Activated CD4-positive, alpha-beta memory T cell treated with anti-CD3 and anti-CD28 coated beads for 36 hours (primary cell): ENCODE measurements at regions of chr16 and their contacts with region 1.

Region 1: DNA sequence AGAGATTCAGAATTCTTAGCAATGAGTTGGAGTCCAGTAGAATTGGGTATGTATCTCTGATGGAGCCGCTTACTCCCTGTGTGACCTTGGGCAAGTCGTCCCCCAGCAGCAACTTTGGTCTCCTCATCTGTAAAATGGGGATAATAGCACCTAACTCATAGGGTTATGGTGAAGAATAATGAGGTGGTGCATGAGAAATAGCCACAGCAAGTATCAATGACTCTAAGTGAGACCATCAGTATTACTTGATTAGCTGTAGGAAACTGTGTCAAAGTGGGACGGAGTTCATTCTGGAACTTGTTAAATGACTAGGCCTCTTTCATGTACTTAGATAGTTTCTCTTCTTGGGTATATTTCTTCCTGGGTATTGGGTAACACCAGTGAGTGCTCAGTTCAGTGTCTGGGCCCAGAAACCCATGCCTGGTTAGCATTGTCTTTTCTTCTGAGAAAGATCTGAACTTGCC is 6.4 kb downstream of the PRKCB start:
- DNase-seq: peak; percentile 71
- H3K4me3 Mint-ChIP-seq: peak overlapping the region; percentile 14
- H3K27ac Mint-ChIP-seq: peak overlapping the region; percentile 68
- H3K4me1 Mint-ChIP-seq: peaks cover 87% of the 10 kb centered on the region
- H3K27me3 Mint-ChIP-seq: no peaks in the 10 kb centered on the region

Region 2: GRCh38 chr16:23826528-23827045 is 15.6 kb before region 1 on chr16:
- CTCF ChIA-PET with region 1: interaction called, 5 read pairs
- POLR2A ChIA-PET with region 1: interaction called, 14 read pairs
- intact Hi-C with region 1: loop called (anchors 1 kb)
- DNase-seq: no peak
- H3K4me3 Mint-ChIP-seq: peak overlapping the region; percentile 43
- H3K27ac Mint-ChIP-seq: peak overlapping the region; percentile 62
- H3K4me1 Mint-ChIP-seq: peaks cover 20% of the 10 kb centered on the region
- H3K27me3 Mint-ChIP-seq: no peaks in the 10 kb centered on the region

Region 3: DNA sequence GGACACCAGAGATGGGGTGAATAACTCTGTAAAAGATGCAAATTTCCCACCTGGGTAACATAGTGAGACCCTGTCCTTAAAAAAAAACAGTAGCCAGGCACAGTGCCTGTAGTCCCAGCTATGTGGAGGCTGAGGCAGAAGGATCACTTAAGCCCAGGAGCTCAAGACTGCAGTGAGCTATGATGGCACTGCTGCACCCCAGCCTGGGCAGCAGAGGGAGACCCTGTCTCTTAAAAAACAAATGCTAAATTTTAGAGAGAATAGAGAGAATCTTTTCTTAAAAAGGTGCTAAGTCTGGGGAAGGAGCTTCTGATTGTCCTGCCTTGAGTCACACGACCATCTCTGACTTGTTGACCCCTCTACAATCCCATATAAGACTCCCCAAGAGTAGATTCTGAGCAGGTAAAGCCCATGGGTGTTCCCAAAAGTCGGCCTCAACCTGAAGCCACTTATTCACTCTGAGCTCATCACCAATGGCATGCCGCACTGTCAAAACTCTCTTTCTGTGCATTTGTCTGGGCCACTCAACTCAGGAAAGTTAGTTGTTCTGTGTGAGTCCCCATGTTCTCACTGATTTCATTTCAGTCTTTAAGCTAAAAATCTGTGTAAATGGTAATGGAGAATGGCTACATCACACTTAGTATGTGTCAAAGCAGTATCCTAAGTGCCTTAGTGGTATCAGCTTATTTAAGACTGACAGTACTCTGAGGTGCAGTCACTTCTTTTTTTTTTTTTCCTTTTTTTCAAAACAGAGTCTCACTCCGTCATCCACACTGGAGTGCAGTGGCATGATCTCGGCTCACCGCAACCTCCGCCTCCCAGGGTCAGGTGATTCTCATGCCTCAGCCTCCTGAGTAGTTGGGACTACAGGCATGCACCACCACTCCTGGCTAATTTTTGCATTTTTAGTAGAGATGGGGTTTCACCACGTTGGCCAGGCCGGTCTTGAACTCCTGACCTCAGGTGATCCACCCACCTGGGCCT is 35.2 kb after region 1 on chr16:
- CTCF ChIA-PET with region 1: interaction called, 4 read pairs
- POLR2A ChIA-PET with region 1: interaction called, 7 read pairs
- intact Hi-C with region 1: loop called (anchors 1 kb)
- DNase-seq: peak; percentile 65
- H3K4me3 Mint-ChIP-seq: no peak overlapping the region
- H3K27ac Mint-ChIP-seq: peak overlapping the region; percentile 49
- H3K4me1 Mint-ChIP-seq: peaks cover 73% of the 10 kb centered on the region
- H3K27me3 Mint-ChIP-seq: no peaks in the 10 kb centered on the region

Region 4: GRCh38 chr16:24010440-24011089 is 168.4 kb after region 1 on chr16:
- CTCF ChIA-PET with region 1: interaction called, 13 read pairs
- POLR2A ChIA-PET with region 1: interaction called, 3 read pairs
- intact Hi-C with region 1: loop called (anchors 2 kb)
- DNase-seq: peak; percentile 86
- H3K4me3 Mint-ChIP-seq: no peak overlapping the region
- H3K27ac Mint-ChIP-seq: no peak overlapping the region
- H3K4me1 Mint-ChIP-seq: peaks cover 49% of the 10 kb centered on the region
- H3K27me3 Mint-ChIP-seq: no peaks in the 10 kb centered on the region

Region 5: DNA sequence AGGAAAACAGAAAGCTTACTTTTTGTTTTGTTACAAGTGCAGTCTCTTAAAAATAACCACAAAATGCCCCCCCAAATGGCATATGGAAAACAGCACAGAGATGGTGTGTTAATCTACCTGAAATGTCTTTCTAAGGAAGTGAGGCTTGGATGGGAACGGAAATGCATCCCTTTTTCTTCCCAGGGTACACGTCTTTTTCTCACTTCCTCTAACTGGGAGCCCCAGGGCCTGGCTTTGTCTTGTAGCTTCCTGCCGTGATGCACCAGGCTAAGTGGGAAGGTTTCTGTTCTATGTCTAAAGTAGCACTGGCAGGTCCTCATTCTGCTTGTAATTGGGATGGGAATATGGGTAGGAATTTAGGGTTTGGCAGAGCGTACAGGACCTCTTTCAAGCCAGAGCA is 361.5 kb after region 1 on chr16:
- CTCF ChIA-PET with region 1: no interaction called
- POLR2A ChIA-PET with region 1: no interaction called
- intact Hi-C with region 1: no loop called
- DNase-seq: no peak
- H3K4me3 Mint-ChIP-seq: no peak overlapping the region
- H3K27ac Mint-ChIP-seq: no peak overlapping the region
- H3K4me1 Mint-ChIP-seq: peaks cover 5% of the 10 kb centered on the region
- H3K27me3 Mint-ChIP-seq: no peaks in the 10 kb centered on the region

Region 6: GRCh38 chr16:24539291-24539849 is 697.2 kb after region 1 on chr16 and contains the start of gene RBBP6:
- CTCF ChIA-PET with region 1: no interaction called
- POLR2A ChIA-PET with region 1: no interaction called
- intact Hi-C with region 1: loop called (anchors 5 kb)
- DNase-seq: peak; percentile 95
- H3K4me3 Mint-ChIP-seq: peak within 1 kb of the TSS; percentile 100
- H3K27ac Mint-ChIP-seq: peak within 1 kb of the TSS; percentile 100
- H3K4me1 Mint-ChIP-seq: peaks cover 17% of the 10 kb centered on the region
- H3K27me3 Mint-ChIP-seq: no peaks in the 10 kb centered on the region
- total RNA-seq, gene RBBP6: 74.6 to 76.1 TPM